H1 (cell line): ENCODE measurements at regions of chr5 and their contacts with region 1.

Region 1: GRCh38 chr5:37774912-37775483 is 64.8 kb downstream of the GDNF start:
- DNase-seq: peak in 1 of 2 experiments; percentile 80
- H3K4me3 ChIP-seq: no peak overlapping the region
- H3K27ac ChIP-seq: no peak overlapping the region
- H3K4me1 ChIP-seq: no peaks in the 10 kb centered on the region
- H3K27me3 ChIP-seq: no peaks in the 10 kb centered on the region
- CTCF ChIP-seq: peak in 2 of 3 experiments; percentile 32 to 68; a peak in 2 of 4 replicates
- EP300 ChIP-seq: no peak
- POLR2A ChIP-seq: no peak
- RAD21 ChIP-seq: peak; percentile 69 to 70

Region 2: GRCh38 chr5:37665889-37666288 is 109.1 kb before region 1 on chr5:
- CTCF ChIA-PET with region 1: no interaction called
- POLR2A ChIA-PET with region 1: no interaction called
- DNase-seq: no peak
- H3K4me3 ChIP-seq: no peak overlapping the region
- H3K27ac ChIP-seq: no peak overlapping the region
- H3K4me1 ChIP-seq: peaks cover 0 to 10% (median 0%) of the 10 kb centered on the region in 4 experiments; a peak in 1 of 7 replicates
- H3K27me3 ChIP-seq: no peaks in the 10 kb centered on the region; a peak in 1 of 7 replicates
- CTCF ChIP-seq: no peak
- EP300 ChIP-seq: no peak
- POLR2A ChIP-seq: no peak
- RAD21 ChIP-seq: no peak

Region 3: GRCh38 chr5:37757980-37758583 is 16.9 kb before region 1 on chr5:
- CTCF ChIA-PET with region 1: interaction called, 20 read pairs
- POLR2A ChIA-PET with region 1: no interaction called
- DNase-seq: no peak
- H3K4me3 ChIP-seq: no peak overlapping the region
- H3K27ac ChIP-seq: no peak overlapping the region
- H3K4me1 ChIP-seq: no peaks in the 10 kb centered on the region
- H3K27me3 ChIP-seq: no peaks in the 10 kb centered on the region
- CTCF ChIP-seq: peak in 2 of 3 experiments; percentile 1 to 7; a peak in 2 of 4 replicates
- EP300 ChIP-seq: no peak
- POLR2A ChIP-seq: no peak
- RAD21 ChIP-seq: peak; percentile 12 to 17; a peak in 2 of 4 replicates

Region 4: DNA sequence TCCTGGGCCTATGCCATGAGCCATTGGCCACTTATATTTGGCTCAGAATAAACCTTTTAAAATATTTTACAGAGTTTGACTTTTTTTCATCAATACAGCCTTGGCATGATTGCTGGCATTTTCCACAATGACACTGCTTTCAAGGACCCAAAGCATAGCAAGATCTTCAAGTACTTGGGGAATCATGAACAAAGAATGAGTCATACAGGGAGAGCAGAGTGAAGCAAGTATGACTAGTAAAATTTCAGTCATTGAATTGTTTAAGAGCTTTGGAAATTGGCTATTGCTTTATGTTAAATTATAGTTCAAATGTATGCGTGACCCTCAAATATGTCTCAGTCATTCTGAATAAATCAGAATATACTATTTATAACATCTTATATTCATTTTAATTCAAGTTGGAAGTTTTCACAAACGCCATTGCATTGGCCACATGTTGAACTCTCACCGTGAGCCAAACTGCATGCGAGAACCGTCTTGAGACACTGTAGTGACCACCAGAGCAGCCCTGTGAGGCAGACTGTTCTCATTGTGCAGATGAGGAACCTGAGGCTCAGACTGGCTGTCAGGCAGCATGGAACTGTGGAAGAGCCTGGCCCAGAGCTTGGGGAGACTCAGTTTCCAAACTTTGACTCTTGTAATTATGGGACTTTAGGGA is 12.0 kb after region 1 on chr5:
- CTCF ChIA-PET with region 1: interaction called, 10 read pairs
- POLR2A ChIA-PET with region 1: no interaction called
- DNase-seq: no peak
- H3K4me3 ChIP-seq: no peak overlapping the region
- H3K27ac ChIP-seq: no peak overlapping the region
- H3K4me1 ChIP-seq: no peaks in the 10 kb centered on the region
- H3K27me3 ChIP-seq: no peaks in the 10 kb centered on the region
- CTCF ChIP-seq: no peak
- EP300 ChIP-seq: no peak
- POLR2A ChIP-seq: no peak
- RAD21 ChIP-seq: no peak